ENCODE measurements at regions of chr17 and their contacts with region 1.

Region 1: DNA sequence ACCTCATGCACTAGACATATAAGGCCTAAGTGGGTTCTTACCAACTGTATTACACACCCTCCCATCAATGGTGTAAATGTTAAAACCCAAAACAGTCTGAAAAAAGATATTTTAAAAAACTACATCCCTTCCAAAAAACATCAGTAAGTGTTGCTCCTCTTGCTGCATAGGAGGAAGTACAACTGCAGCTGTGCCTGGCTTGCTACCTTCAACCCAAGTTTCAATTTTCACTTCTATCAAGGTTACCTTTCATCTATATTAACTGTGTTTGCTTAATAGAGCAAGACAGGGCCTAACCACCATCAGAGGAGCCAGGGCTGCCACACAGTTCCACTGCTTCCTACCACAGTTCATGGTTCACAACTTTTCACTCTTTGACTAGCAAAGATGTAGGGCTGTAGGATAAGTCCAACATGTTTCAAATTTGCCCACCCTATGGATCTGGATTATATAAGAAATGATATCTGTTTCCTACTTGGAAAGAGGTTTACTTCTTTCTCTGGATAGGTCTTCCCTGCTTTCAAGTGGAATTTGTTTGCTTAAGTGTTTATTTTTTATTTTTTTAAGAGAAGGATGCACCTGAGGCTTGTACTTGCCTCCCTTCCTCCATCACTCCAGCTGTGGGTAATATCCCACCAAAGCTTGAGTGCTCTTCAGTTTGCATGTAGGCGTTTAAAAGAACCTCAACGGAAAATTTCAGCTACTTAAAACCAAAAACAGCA is 56.7 kb downstream of the GRB7 start:
- DNase-seq: peak; percentile 50 to 67 (median 58)
- H3K4me3 ChIP-seq: no peak overlapping the region
- H3K4me3 Mint-ChIP-seq: peak overlapping the region in 7 of 8 donors; percentile 40 to 82 (median 73)
- H3K27ac ChIP-seq: peak overlapping the region; percentile 54
- H3K27ac Mint-ChIP-seq: peak overlapping the region; percentile 83 to 97 (median 91)
- H3K4me1 ChIP-seq: peaks cover 75% of the 10 kb centered on the region
- H3K4me1 Mint-ChIP-seq: peaks cover 56 to 85% (median 70%) of the 10 kb centered on the region in 4 donors
- H3K27me3 ChIP-seq: no peaks in the 10 kb centered on the region
- H3K27me3 Mint-ChIP-seq: no peaks in the 10 kb centered on the region

Region 2: GRCh38 chr17:39744836-39745672 is 49.4 kb before region 1 on chr17:
- CTCF ChIA-PET with region 1: no interaction called
- POLR2A ChIA-PET with region 1: no interaction called
- intact Hi-C with region 1: no loop called
- DNase-seq: no peak
- H3K4me3 ChIP-seq: no peak overlapping the region
- H3K4me3 Mint-ChIP-seq: no peak overlapping the region
- H3K27ac ChIP-seq: no peak overlapping the region
- H3K27ac Mint-ChIP-seq: peak overlapping the region in 1 of 7 donors; percentile 75
- H3K4me1 ChIP-seq: no peaks in the 10 kb centered on the region
- H3K4me1 Mint-ChIP-seq: peaks cover 0 to 2% (median 0%) of the 10 kb centered on the region in 4 donors
- H3K27me3 ChIP-seq: no peaks in the 10 kb centered on the region
- H3K27me3 Mint-ChIP-seq: peaks cover 2 to 7% of the 10 kb centered on the region in 2 donors

Region 3: DNA sequence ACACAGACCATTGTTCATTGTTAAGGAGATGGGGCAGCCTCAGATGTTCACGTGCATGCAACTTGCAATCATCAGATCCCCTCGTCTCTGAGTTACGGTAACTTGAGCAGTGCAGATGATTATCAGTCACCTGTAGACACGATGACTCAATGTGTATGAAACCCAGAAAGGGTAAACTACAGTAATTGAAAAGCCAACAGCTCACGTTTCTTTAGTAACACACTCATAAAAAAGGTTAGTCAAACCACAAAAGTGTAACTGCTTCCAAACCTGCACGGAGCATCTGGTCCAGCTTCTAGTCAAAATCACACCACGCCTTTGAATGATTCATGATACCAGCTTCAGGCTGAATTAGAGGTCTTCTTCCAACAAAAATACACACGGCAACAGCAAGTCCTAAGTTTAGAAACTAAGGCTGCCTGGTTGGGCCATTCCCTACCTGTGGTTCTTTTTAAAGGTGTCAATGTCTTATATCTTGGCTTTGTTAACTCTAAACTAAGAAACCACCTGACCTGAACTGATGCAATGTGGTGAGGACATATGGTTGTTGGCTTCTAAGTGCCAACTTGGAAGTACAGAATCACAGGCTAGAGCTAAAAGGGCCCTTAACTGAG is 24.3 kb before region 1 on chr17:
- CTCF ChIA-PET with region 1: interaction called, 3 read pairs
- POLR2A ChIA-PET with region 1: interaction called, 174 read pairs
- intact Hi-C with region 1: loop called (anchors 1 kb)
- DNase-seq: peak; percentile 67 to 92 (median 72)
- H3K4me3 ChIP-seq: peak overlapping the region in 1 of 2 donors; percentile 6
- H3K4me3 Mint-ChIP-seq: peak overlapping the region; percentile 33 to 96 (median 66)
- H3K27ac ChIP-seq: peak overlapping the region; percentile 77
- H3K27ac Mint-ChIP-seq: peak overlapping the region; percentile 88 to 98 (median 95)
- H3K4me1 ChIP-seq: peaks cover 100% of the 10 kb centered on the region
- H3K4me1 Mint-ChIP-seq: peaks cover 81 to 100% (median 89%) of the 10 kb centered on the region in 4 donors
- H3K27me3 ChIP-seq: no peaks in the 10 kb centered on the region
- H3K27me3 Mint-ChIP-seq: no peaks in the 10 kb centered on the region

Region 4: DNA sequence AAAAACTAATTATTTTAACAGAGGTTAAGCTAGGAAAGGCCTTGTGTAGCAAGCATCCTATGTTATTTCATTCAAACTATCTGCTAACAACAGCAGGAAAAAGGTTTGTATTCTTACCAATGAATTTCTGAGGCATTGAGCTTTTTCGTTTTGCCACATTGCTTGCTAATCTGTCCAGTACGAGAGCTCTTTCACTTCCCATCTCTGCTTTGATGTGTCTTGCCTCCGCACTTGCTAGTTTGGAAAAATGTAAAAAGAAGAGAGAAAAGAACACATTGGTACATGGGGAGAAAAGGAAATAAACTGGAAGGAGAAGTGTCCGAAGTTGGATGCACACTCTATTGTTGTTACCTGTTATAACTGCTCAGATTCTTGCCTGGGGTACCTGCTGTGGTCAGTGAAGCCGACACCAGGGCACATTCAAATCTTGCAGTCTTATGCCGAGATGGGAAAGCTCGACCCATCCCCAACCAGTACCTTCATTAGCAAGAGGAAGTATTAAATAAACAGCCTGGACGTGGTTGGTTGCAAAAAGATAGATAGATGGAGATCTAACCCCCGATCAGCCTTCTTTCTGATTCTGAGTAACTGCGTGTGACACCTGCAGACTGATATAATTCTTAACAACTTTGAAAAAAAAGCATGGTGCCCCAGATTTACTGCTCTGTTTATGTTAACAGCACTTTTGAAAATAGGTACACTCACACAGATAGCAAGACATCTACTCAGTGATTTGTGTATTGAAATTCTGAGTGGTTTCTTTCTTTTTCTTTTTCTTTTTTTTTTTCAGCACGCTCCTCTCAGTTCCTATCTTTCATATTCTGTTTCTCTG is 16.7 kb before region 1 on chr17:
- CTCF ChIA-PET with region 1: interaction called, 35 read pairs
- POLR2A ChIA-PET with region 1: interaction called, 174 read pairs
- intact Hi-C with region 1: loop called (anchors 1 kb)
- DNase-seq: peak in 4 of 5 donors; percentile 34 to 57 (median 48)
- H3K4me3 ChIP-seq: peak overlapping the region; percentile 64 to 74
- H3K4me3 Mint-ChIP-seq: peak overlapping the region; percentile 93 to 99 (median 96)
- H3K27ac ChIP-seq: peak overlapping the region; percentile 77
- H3K27ac Mint-ChIP-seq: peak overlapping the region; percentile 89 to 98 (median 95)
- H3K4me1 ChIP-seq: peaks cover 84% of the 10 kb centered on the region
- H3K4me1 Mint-ChIP-seq: peaks cover 51 to 88% (median 69%) of the 10 kb centered on the region in 4 donors
- H3K27me3 ChIP-seq: no peaks in the 10 kb centered on the region
- H3K27me3 Mint-ChIP-seq: no peaks in the 10 kb centered on the region

Region 5: DNA sequence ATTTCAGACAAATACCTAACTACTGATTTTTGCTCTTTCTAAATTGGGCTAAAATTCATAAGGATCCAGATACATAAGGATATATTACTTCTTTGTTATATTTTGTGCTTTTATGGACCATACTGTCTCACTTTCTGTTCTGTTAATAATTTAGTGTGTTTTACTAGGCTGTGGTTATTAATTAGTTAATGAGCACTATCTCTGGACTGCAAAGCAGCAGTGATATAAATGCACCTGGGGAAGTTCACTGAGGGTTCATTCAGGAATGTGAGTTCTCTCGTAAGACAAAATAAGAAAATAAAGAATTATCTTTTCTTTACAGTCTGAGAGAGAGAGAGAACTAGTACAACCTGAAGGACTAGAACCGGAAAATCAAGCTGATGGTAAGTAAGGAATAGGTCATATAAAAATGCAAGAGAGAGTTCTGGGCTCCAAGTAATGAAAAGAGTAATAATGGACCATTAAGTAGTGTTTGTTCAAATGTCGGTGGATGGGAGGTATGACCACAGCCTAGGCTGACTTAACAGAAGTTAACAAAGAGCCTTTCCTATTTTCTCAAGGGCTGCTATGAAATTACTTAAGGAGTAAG is 14.1 kb after region 1 on chr17:
- CTCF ChIA-PET with region 1: interaction called, 8 read pairs
- POLR2A ChIA-PET with region 1: interaction called, 74 read pairs
- intact Hi-C with region 1: no loop called
- DNase-seq: no peak
- H3K4me3 ChIP-seq: no peak overlapping the region
- H3K4me3 Mint-ChIP-seq: no peak overlapping the region
- H3K27ac ChIP-seq: no peak overlapping the region
- H3K27ac Mint-ChIP-seq: peak overlapping the region in 2 of 7 donors; percentile 20 to 31
- H3K4me1 ChIP-seq: peaks cover 53% of the 10 kb centered on the region
- H3K4me1 Mint-ChIP-seq: peaks cover 48 to 64% (median 53%) of the 10 kb centered on the region in 4 donors
- H3K27me3 ChIP-seq: no peaks in the 10 kb centered on the region
- H3K27me3 Mint-ChIP-seq: no peaks in the 10 kb centered on the region

Measured in CD4-positive, alpha-beta memory T cell (primary cell).